Psoas muscle (tissue), 8 donors: ENCODE measurements at regions of chr18 and their contacts with region 1.

Region 1: GRCh38 chr18:44178476-44178875 is 502.2 kb upstream of the SETBP1 start:
- DNase-seq: no peak
- ATAC-seq: no peak
- H3K4me3 ChIP-seq: no peak overlapping the region
- H3K27ac ChIP-seq: no peak overlapping the region
- H3K4me1 ChIP-seq: no peaks in the 10 kb centered on the region
- H3K27me3 ChIP-seq: no peaks in the 10 kb centered on the region
- CTCF ChIP-seq: no peak

Region 2: GRCh38 chr18:44036501-44036900 is 142.0 kb before region 1 on chr18:
- intact Hi-C with region 1: no loop called
- DNase-seq: peak in 1 of 2 donors; percentile 20
- ATAC-seq: no peak
- H3K4me3 ChIP-seq: no peak overlapping the region
- H3K27ac ChIP-seq: no peak overlapping the region
- H3K4me1 ChIP-seq: no peaks in the 10 kb centered on the region
- H3K27me3 ChIP-seq: no peaks in the 10 kb centered on the region
- CTCF ChIP-seq: no peak

Region 3: GRCh38 chr18:44229693-44230108 is 51.2 kb after region 1 on chr18:
- intact Hi-C with region 1: loop called in 1 of 2 experiments (anchors 5 kb)
- DNase-seq: peak; percentile 41 to 59
- ATAC-seq: no peak
- H3K4me3 ChIP-seq: no peak overlapping the region
- H3K27ac ChIP-seq: no peak overlapping the region
- H3K4me1 ChIP-seq: no peaks in the 10 kb centered on the region
- H3K27me3 ChIP-seq: no peaks in the 10 kb centered on the region
- CTCF ChIP-seq: no peak